ENCODE measurements at regions of chr3 and their contacts with region 1.

Region 1: DNA sequence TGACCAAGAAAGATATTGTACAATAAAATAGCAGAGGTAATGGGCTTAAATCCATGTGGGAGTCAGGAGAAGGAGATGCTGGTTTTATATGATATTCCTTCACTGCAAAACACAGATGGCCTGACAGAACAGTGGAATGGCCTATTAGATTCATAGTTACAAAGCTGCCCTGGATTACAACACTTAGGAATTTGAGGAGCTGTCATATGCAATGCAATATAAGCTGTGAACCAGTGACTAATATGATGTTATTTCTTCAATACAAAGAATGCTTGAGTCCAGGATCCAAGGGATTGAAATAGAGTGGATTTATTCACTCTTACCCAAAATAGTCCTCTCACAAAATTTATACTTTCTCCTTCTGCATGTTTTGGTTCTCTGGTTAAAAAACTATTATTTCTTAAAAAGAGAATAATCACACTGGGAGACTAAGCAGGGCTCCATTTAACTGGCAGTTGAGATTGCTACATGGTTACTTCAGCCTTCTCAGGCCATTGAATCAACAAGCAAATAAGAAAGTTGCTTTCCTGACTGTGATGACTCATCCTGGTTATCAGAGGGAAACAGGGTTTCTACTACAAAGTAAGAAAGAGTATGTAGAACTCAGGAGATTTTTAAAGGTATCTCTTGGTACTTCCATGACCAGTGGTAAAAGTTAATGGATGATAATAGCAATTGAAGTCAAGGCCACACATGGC is 79.8 kb upstream of the ZPLD1 start:
- DNase-seq: no peak
- H3K4me3 ChIP-seq: no peak overlapping the region
- H3K27ac ChIP-seq: no peak overlapping the region
- H3K4me1 ChIP-seq: no peaks in the 10 kb centered on the region
- H3K27me3 ChIP-seq: no peaks in the 10 kb centered on the region
- CTCF ChIP-seq: no peak
- EP300 ChIP-seq: no peak
- POLR2A ChIP-seq: no peak

Region 2: GRCh38 chr3:100836661-100837060 is 1518.3 kb before region 1 on chr3:
- in situ Hi-C with region 1: no loop called
- intact Hi-C with region 1: loop called (anchors 5 kb)
- DNase-seq: no peak
- H3K4me3 ChIP-seq: no peak overlapping the region
- H3K27ac ChIP-seq: no peak overlapping the region
- H3K4me1 ChIP-seq: no peaks in the 10 kb centered on the region
- H3K27me3 ChIP-seq: no peaks in the 10 kb centered on the region
- CTCF ChIP-seq: no peak
- EP300 ChIP-seq: no peak
- POLR2A ChIP-seq: no peak

Region 3: GRCh38 chr3:101724329-101725193 is 630.4 kb before region 1 on chr3 and contains the start of gene CEP97:
- in situ Hi-C with region 1: no loop called
- intact Hi-C with region 1: no loop called
- DNase-seq: peak; percentile 90
- H3K4me3 ChIP-seq: peak within 1 kb of the TSS; percentile 53 to 78 (median 62)
- H3K27ac ChIP-seq: peak within 1 kb of the TSS; percentile 79 to 84 (median 81)
- H3K4me1 ChIP-seq: peaks cover 0 to 16% (median 6%) of the 10 kb centered on the region in 4 donors
- H3K27me3 ChIP-seq: no peaks in the 10 kb centered on the region
- CTCF ChIP-seq: no peak
- EP300 ChIP-seq: no peak
- POLR2A ChIP-seq: no peak
- total RNA-seq, gene CEP97: 1.1 to 22.1 (median 6.1) TPM

Region 4: DNA sequence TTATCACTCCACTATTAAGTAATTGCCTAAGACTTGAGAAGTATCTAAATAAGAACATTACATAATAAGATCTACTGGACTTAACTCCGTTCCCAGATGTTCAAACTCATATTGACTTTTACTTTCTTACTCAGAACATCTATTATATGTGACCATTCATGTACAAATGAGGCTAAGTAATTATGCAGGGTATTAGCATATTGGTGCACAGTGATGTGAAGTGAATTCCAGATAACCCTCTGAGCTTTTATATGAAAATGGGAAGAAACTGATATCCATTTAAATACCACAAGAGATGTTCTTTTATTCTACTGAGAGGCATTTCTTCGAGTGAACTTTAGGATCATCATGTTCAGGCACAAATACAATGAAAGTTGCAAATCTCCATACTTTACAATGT is 215.6 kb after region 1 on chr3:
- in situ Hi-C with region 1: no loop called
- intact Hi-C with region 1: no loop called
- DNase-seq: no peak
- H3K4me3 ChIP-seq: no peak overlapping the region
- H3K27ac ChIP-seq: no peak overlapping the region
- H3K4me1 ChIP-seq: no peaks in the 10 kb centered on the region
- H3K27me3 ChIP-seq: no peaks in the 10 kb centered on the region
- CTCF ChIP-seq: no peak
- EP300 ChIP-seq: no peak
- POLR2A ChIP-seq: no peak

Region 5: GRCh38 chr3:103712320-103713008 is 1357.5 kb after region 1 on chr3:
- in situ Hi-C with region 1: no loop called
- intact Hi-C with region 1: loop called (anchors 10 kb)
- DNase-seq: no peak
- H3K4me3 ChIP-seq: no peak overlapping the region
- H3K27ac ChIP-seq: no peak overlapping the region
- H3K4me1 ChIP-seq: no peaks in the 10 kb centered on the region
- H3K27me3 ChIP-seq: no peaks in the 10 kb centered on the region
- CTCF ChIP-seq: no peak
- EP300 ChIP-seq: no peak
- POLR2A ChIP-seq: no peak